ENCODE measurements at regions of chr6 and their contacts with region 1.

Region 1: DNA sequence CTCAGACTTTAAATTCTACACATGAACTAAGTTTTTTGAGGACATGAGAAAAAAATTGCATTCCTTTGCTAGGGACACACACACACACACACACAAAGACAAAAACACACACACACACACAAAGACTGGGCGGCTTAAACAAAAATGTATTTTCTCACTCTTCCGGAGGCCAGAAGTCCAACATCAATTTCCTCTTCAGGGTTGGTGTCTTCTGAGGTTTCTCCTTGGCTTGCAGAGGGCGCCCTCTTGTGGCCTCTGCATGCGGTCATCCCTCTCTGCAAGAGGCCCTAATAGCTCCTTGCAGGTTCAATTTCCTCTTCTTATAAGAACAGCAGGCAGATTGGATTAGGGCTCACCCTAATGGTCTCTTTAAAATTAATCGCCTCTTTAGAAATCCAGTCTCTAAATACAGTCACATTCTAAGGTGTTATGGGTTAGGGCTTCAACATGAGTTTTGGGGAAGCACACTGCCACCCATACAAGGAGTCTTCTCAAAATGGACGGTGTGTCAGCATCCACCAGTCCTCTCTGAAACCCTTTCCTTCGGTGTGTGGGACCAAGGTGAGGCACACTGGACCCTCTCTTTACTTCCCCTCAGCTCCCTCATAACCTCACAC is 61.4 kb downstream of the GPR6 start:
- DNase-seq: peak; percentile 90
- H3K4me3 Mint-ChIP-seq: peak overlapping the region; percentile 82
- H3K27ac Mint-ChIP-seq: peak overlapping the region; percentile 86
- H3K4me1 Mint-ChIP-seq: peaks cover 10% of the 10 kb centered on the region
- H3K27me3 Mint-ChIP-seq: no peaks in the 10 kb centered on the region

Region 2: GRCh38 chr6:109526905-109527628 is 512.4 kb before region 1 on chr6:
- CTCF ChIA-PET with region 1: interaction called, 23 read pairs
- POLR2A ChIA-PET with region 1: no interaction called
- intact Hi-C with region 1: loop called (anchors 1 kb)
- DNase-seq: peak; percentile 45
- H3K4me3 Mint-ChIP-seq: no peak overlapping the region
- H3K27ac Mint-ChIP-seq: no peak overlapping the region
- H3K4me1 Mint-ChIP-seq: no peaks in the 10 kb centered on the region
- H3K27me3 Mint-ChIP-seq: no peaks in the 10 kb centered on the region

Region 3: GRCh38 chr6:109690737-109691621 is 348.5 kb before region 1 on chr6 and contains the starts of genes AK9 and FIG4:
- CTCF ChIA-PET with region 1: interaction called, 26 read pairs
- POLR2A ChIA-PET with region 1: interaction called, 5 read pairs
- intact Hi-C with region 1: no loop called
- DNase-seq: peak; percentile 95
- H3K4me3 Mint-ChIP-seq: peak within 1 kb of the TSS; percentile 96
- H3K27ac Mint-ChIP-seq: peak within 1 kb of the TSS; percentile 89
- H3K4me1 Mint-ChIP-seq: peaks cover 30% of the 10 kb centered on the region
- H3K27me3 Mint-ChIP-seq: no peaks in the 10 kb centered on the region
- total RNA-seq, gene AK9: 2.2 to 2.8 TPM
- total RNA-seq, gene FIG4: 17.3 to 18.2 TPM

Region 4: DNA sequence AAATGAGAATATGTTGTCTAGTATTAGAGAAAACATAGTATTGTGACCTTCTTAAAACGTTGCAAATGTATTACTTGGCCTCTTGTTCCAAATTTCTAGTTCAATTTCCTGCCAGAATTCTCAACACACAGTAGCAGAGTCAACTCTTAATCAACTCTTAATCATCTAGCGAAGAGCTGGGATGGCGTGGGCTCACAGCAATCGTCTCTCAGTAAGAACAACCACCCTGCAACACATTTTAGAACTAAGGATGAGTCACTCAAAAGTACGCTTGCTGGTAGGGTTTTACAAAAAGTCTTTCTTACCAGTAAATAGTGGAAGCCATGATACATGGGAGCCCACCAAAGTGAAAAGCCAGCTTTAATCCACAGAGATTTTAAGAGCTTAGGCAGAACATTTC is 36.8 kb before region 1 on chr6:
- CTCF ChIA-PET with region 1: interaction called, 16 read pairs
- POLR2A ChIA-PET with region 1: no interaction called
- intact Hi-C with region 1: no loop called
- DNase-seq: no peak
- H3K4me3 Mint-ChIP-seq: no peak overlapping the region
- H3K27ac Mint-ChIP-seq: no peak overlapping the region
- H3K4me1 Mint-ChIP-seq: no peaks in the 10 kb centered on the region
- H3K27me3 Mint-ChIP-seq: peaks cover 25% of the 10 kb centered on the region

Region 5: GRCh38 chr6:110053395-110054240 is 14.1 kb after region 1 on chr6:
- CTCF ChIA-PET with region 1: interaction called, 33 read pairs
- POLR2A ChIA-PET with region 1: no interaction called
- intact Hi-C with region 1: no loop called
- DNase-seq: no peak
- H3K4me3 Mint-ChIP-seq: no peak overlapping the region
- H3K27ac Mint-ChIP-seq: no peak overlapping the region
- H3K4me1 Mint-ChIP-seq: no peaks in the 10 kb centered on the region
- H3K27me3 Mint-ChIP-seq: no peaks in the 10 kb centered on the region

Region 6: GRCh38 chr6:110389689-110390382 is 350.4 kb after region 1 on chr6:
- CTCF ChIA-PET with region 1: interaction called, 75 read pairs
- POLR2A ChIA-PET with region 1: no interaction called
- intact Hi-C with region 1: loop called (anchors 1 kb)
- DNase-seq: no peak
- H3K4me3 Mint-ChIP-seq: no peak overlapping the region
- H3K27ac Mint-ChIP-seq: no peak overlapping the region
- H3K4me1 Mint-ChIP-seq: peaks cover 2% of the 10 kb centered on the region
- H3K27me3 Mint-ChIP-seq: no peaks in the 10 kb centered on the region

Measured in activated CD4-positive, alpha-beta memory T cell treated with anti-CD3 and anti-CD28 coated beads for 36 hours (primary cell).